Heart left ventricle (tissue), 16 donors: ENCODE measurements at regions of chr6 and their contacts with region 1.

Region 1: GRCh38 chr6:167826230-167826895 is 348 bp upstream of the AFDN start:
- DNase-seq: peak; percentile 77 to 83 (median 79)
- ATAC-seq: peak; percentile 85 to 94 (median 92)
- H3K4me3 ChIP-seq: peak overlapping the region; percentile 54 to 90 (median 76)
- H3K27ac ChIP-seq: peak overlapping the region in 8 of 12 donors; percentile 17 to 75 (median 58)
- H3K4me1 ChIP-seq: peaks cover 0 to 46% (median 22%) of the 10 kb centered on the region in 12 donors
- H3K27me3 ChIP-seq: peaks cover 0 to 26% (median 0%) of the 10 kb centered on the region in 9 donors
- CTCF ChIP-seq: peak; percentile 14 to 57 (median 42)
- POLR2A ChIP-seq: no peak

Region 2: GRCh38 chr6:167450626-167451025 is 375.7 kb before region 1 on chr6:
- intact Hi-C with region 1: no loop called
- DNase-seq: no peak
- ATAC-seq: no peak
- H3K4me3 ChIP-seq: no peak overlapping the region
- H3K27ac ChIP-seq: no peak overlapping the region
- H3K4me1 ChIP-seq: peaks cover 0 to 4% (median 0%) of the 10 kb centered on the region in 12 donors
- H3K27me3 ChIP-seq: no peaks in the 10 kb centered on the region
- CTCF ChIP-seq: no peak
- POLR2A ChIP-seq: no peak

Region 3: DNA sequence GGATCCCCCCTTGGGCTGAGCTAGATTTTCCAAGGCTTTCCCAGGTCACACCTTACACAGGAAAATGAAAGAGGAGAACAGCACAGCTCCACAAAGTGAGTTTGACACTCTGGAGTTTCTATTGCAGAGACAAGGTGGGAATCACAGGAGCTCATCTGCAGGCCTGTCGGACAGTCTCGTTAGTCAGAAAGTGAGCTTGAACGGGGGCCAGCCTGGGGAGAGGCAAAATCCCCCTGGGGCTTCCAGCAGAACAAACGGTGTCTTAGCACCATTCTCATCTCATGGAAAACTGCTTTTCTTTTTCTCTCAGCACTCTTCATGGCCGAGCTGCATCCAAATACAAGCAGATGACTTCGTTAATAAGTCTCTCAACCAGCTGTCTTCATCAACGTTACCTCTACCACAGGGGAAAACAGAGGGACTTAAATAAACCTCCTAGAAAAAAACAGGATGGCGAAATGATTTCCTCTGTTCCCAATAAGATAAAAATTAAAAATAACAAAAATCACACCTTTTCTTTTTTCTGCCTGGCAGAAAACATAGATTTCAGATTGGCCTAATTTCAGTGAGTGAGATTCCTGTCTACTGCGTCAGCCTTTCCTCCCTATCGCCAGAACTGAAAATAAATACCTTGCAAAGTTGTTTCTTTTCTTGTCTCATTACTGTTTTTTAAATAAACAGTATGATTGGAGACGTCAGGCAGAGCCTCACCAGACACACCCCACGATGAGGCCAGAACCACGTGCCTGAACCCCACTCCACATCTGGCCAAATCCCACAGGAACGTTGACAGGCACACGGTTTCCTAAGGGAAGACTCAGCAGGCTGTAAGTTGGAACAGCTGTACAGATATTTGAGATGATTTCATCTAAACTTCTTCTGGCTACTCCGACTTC is 282.5 kb before region 1 on chr6:
- intact Hi-C with region 1: no loop called
- DNase-seq: peak in 4 of 5 donors; percentile 61 to 78 (median 69)
- ATAC-seq: peak; percentile 45 to 92 (median 82)
- H3K4me3 ChIP-seq: no peak overlapping the region
- H3K27ac ChIP-seq: peak overlapping the region; percentile 5 to 77 (median 52)
- H3K4me1 ChIP-seq: peaks cover 0 to 25% (median 12%) of the 10 kb centered on the region in 12 donors
- H3K27me3 ChIP-seq: no peaks in the 10 kb centered on the region
- CTCF ChIP-seq: no peak
- POLR2A ChIP-seq: no peak

Region 4: GRCh38 chr6:167669870-167670802 is 156.2 kb before region 1 on chr6:
- intact Hi-C with region 1: loop called in 1 of 10 experiments (anchors 5 kb)
- DNase-seq: peak in 1 of 5 donors; percentile 42
- ATAC-seq: peak in 3 of 4 donors; percentile 63 to 66 (median 64)
- H3K4me3 ChIP-seq: no peak overlapping the region
- H3K27ac ChIP-seq: no peak overlapping the region
- H3K4me1 ChIP-seq: peaks cover 0 to 27% (median 9%) of the 10 kb centered on the region in 12 donors
- H3K27me3 ChIP-seq: no peaks in the 10 kb centered on the region
- CTCF ChIP-seq: no peak
- POLR2A ChIP-seq: no peak